Tibial artery (tissue), 4 donors: ENCODE measurements at regions of chr1 and their contacts with region 1.

Region 1: DNA sequence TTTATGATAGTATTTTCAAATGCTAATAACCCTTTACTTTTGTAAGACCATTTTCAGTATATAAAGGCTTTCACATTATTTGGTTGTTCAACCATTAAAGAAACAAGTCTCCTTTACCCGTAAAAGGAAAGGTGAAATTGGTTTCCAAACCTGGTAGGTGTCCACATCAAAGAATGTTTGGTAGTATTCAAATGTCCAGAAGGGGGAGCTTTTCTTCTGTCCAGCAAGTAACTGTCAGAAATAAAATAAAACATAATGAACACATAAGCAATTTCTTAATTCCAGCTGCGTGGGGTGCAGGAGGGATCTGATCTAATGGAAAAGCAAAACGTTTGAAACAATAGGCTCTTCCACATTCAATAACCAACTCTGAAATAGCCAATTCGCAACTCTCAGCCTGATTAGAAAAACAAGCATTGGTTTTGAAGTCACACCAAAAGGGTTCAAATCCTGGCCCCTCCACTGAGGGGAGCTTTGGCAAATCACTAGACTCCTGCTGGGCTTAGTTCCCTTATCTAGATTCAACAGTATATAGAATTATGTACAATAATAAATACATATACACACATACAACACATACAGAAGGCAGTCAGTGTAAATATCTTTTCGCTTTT is 11.0 kb downstream of the YIPF1 start:
- DNase-seq: no peak
- H3K4me3 ChIP-seq: no peak overlapping the region
- H3K27ac ChIP-seq: no peak overlapping the region
- H3K4me1 ChIP-seq: no peaks in the 10 kb centered on the region
- H3K27me3 ChIP-seq: no peaks in the 10 kb centered on the region
- CTCF ChIP-seq: peak; percentile 59 to 70

Region 2: DNA sequence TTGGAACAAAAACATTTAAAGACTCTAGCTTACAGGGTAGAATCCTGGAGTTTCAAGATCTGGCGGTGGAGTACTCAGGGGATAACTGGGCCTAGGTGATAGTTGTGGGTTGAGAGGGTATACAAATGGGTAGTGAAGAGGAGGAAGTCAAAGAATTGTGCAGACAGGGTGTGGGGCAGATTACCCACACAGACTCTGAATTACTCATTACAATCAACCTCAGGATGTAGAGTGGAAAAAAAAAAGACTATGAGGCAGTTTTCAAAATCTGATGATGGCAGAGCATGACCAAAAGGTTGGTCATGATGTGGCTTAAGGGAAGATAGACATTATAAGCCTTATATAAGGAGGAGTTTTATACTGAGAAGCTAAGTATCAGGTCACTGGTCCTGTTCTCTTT is 95.5 kb before region 1 on chr1:
- intact Hi-C with region 1: no loop called
- DNase-seq: no peak
- H3K4me3 ChIP-seq: no peak overlapping the region
- H3K27ac ChIP-seq: no peak overlapping the region
- H3K4me1 ChIP-seq: no peaks in the 10 kb centered on the region
- H3K27me3 ChIP-seq: no peaks in the 10 kb centered on the region
- CTCF ChIP-seq: no peak

Region 3: DNA sequence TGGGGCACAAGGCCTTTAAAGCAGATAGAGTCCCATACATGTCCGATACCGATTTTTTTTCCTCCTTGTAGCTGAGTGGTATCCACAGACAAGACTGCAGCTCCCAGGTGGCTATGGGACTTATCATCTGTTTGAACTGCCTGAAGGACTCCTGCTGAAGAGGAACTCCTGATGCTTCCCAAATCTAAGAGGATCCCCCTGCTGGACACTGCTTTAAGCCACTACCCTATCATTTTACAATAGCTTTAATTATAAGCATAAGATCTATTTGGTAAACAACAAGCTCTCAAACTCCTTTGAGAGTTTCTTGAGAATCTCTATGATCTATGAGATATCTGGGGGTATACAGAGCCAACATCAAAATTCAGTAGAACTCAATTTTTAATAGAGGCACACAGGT is 52.2 kb before region 1 on chr1:
- intact Hi-C with region 1: no loop called
- DNase-seq: no peak
- H3K4me3 ChIP-seq: no peak overlapping the region
- H3K27ac ChIP-seq: no peak overlapping the region
- H3K4me1 ChIP-seq: no peaks in the 10 kb centered on the region
- H3K27me3 ChIP-seq: no peaks in the 10 kb centered on the region
- CTCF ChIP-seq: no peak

Region 4: DNA sequence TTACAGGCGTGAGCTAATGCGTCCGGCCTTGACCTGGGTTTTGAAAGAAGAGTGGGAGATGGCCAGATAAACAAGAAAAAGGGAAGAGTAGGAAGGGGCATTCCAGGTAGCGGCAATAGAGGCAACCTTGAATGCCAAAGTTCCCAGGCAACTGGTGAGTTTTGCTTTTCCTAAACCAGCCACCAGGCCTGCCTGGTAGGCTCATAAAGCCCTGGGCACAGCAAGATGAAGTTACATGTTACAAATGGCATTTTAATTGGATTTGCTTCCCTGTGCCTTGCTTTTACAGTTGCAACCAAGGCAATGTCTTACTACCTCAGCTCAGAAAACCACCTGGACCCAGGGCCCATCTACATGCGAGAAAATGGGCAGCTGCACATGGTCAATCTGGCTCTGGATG is 73.1 kb after region 1 on chr1:
- intact Hi-C with region 1: loop called (anchors 5 kb)
- DNase-seq: no peak
- H3K4me3 ChIP-seq: no peak overlapping the region
- H3K27ac ChIP-seq: no peak overlapping the region
- H3K4me1 ChIP-seq: peaks cover 0 to 37% (median 15%) of the 10 kb centered on the region in 4 donors
- H3K27me3 ChIP-seq: no peaks in the 10 kb centered on the region
- CTCF ChIP-seq: no peak